ENCODE measurements at regions of chr4 and their contacts with region 1.

Region 1: DNA sequence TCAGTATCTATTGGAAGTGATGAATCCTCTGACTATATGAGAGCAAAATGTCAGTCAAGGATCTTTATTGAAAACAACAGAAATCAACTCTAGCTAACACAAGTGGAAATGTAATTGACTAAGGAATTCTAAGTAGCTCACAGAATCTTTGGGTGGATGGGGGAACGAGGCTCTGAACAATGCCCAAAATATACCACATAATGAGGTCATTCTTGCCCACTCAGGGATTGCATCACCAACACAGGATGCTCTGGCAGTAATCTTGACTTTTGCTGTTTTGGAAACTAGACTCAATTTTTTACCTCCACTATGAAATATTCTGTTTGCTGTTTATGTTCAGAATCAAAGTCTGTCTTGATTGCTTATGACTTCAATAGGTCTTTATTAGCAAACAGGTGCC is 127.4 kb upstream of the UNC5C start:
- DNase-seq: no peak
- H3K4me3 ChIP-seq: no peak overlapping the region
- H3K4me3 Mint-ChIP-seq: no peak overlapping the region
- H3K27ac Mint-ChIP-seq: no peak overlapping the region
- H3K4me1 ChIP-seq: no peaks in the 10 kb centered on the region
- H3K4me1 Mint-ChIP-seq: no peaks in the 10 kb centered on the region
- H3K27me3 ChIP-seq: no peaks in the 10 kb centered on the region
- H3K27me3 Mint-ChIP-seq: no peaks in the 10 kb centered on the region
- CTCF ChIP-seq: no peak

Region 2: GRCh38 chr4:95701500-95702170 is 25.4 kb after region 1 on chr4:
- CTCF ChIA-PET with region 1: no interaction called
- POLR2A ChIA-PET with region 1: no interaction called
- intact Hi-C with region 1: loop called (anchors 1 kb)
- DNase-seq: no peak
- H3K4me3 ChIP-seq: no peak overlapping the region
- H3K4me3 Mint-ChIP-seq: no peak overlapping the region
- H3K27ac Mint-ChIP-seq: no peak overlapping the region
- H3K4me1 ChIP-seq: no peaks in the 10 kb centered on the region
- H3K4me1 Mint-ChIP-seq: no peaks in the 10 kb centered on the region
- H3K27me3 ChIP-seq: no peaks in the 10 kb centered on the region
- H3K27me3 Mint-ChIP-seq: no peaks in the 10 kb centered on the region
- CTCF ChIP-seq: no peak

Region 3: GRCh38 chr4:95998311-95998710 is 322.1 kb after region 1 on chr4:
- CTCF ChIA-PET with region 1: no interaction called
- POLR2A ChIA-PET with region 1: no interaction called
- intact Hi-C with region 1: no loop called
- DNase-seq: no peak
- H3K4me3 ChIP-seq: no peak overlapping the region
- H3K4me3 Mint-ChIP-seq: no peak overlapping the region
- H3K27ac Mint-ChIP-seq: no peak overlapping the region
- H3K4me1 ChIP-seq: no peaks in the 10 kb centered on the region
- H3K4me1 Mint-ChIP-seq: no peaks in the 10 kb centered on the region
- H3K27me3 ChIP-seq: no peaks in the 10 kb centered on the region
- H3K27me3 Mint-ChIP-seq: no peaks in the 10 kb centered on the region
- CTCF ChIP-seq: no peak